HepG2 (cell line): ENCODE measurements at regions of chr5 and their contacts with region 1.

Region 1: GRCh38 chr5:44681906-44682305 is 126.8 kb upstream of the MRPS30 start:
- DNase-seq: no peak
- ATAC-seq: no peak
- H3K4me3 ChIP-seq: no peak overlapping the region
- H3K27ac ChIP-seq: no peak overlapping the region
- H3K4me1 ChIP-seq: no peaks in the 10 kb centered on the region
- H3K27me3 ChIP-seq: no peaks in the 10 kb centered on the region
- CTCF ChIP-seq: no peak
- EP300 ChIP-seq: no peak
- POLR2A ChIP-seq: no peak
- RAD21 ChIP-seq: no peak

Region 2: DNA sequence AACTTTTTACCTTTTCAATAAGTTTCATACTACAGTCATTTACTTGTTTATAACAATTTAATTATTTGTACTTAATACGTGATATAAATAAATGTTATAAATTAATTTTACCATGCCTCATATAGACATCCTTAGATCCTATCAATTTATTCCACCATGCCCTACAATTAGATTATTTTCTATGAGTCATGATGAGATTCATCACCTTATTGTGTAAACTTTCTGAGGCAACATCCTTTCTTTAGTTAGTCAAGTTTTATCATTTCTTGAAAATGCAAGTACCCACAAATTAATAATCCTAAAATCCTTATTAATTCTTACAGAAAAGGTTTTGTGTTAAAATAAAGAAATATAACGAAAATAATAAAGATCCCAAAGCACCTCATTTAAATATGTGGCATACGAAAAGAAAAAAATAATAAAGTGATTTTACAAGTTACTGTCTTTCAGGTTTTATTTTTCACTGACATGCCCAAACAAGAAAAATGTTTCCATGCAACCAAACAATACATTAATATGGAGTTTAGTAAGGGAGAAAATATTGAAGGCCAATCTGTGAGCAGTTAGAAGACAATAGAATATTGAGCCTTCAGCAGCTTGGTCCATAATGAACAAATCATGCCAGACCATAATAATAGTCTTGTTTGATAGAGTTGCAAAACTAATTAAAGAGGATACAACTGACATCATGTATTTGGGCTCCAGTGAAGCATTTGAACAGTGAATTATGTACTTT is 61.9 kb before region 1 on chr5:
- CTCF ChIA-PET with region 1: no interaction called
- POLR2A ChIA-PET with region 1: no interaction called
- in situ Hi-C with region 1: no loop called
- intact Hi-C with region 1: no loop called
- DNase-seq: no peak
- ATAC-seq: no peak
- H3K4me3 ChIP-seq: no peak overlapping the region
- H3K27ac ChIP-seq: no peak overlapping the region
- H3K4me1 ChIP-seq: no peaks in the 10 kb centered on the region
- H3K27me3 ChIP-seq: no peaks in the 10 kb centered on the region
- CTCF ChIP-seq: no peak
- EP300 ChIP-seq: no peak
- POLR2A ChIP-seq: no peak
- RAD21 ChIP-seq: no peak

Region 3: GRCh38 chr5:44727100-44727499 is 45.2 kb after region 1 on chr5:
- CTCF ChIA-PET with region 1: no interaction called
- POLR2A ChIA-PET with region 1: no interaction called
- in situ Hi-C with region 1: no loop called
- intact Hi-C with region 1: loop called (anchors 1 kb)
- DNase-seq: no peak
- ATAC-seq: no peak
- H3K4me3 ChIP-seq: no peak overlapping the region
- H3K27ac ChIP-seq: no peak overlapping the region
- H3K4me1 ChIP-seq: no peaks in the 10 kb centered on the region
- H3K27me3 ChIP-seq: no peaks in the 10 kb centered on the region
- CTCF ChIP-seq: no peak
- EP300 ChIP-seq: no peak
- POLR2A ChIP-seq: no peak
- RAD21 ChIP-seq: no peak